ENCODE measurements at regions of chr2 and their contacts with region 1.

Region 1: GRCh38 chr2:97812931-97813330 is 99.6 kb downstream of the ZAP70 start:
- DNase-seq: no peak
- ATAC-seq: no peak

Region 2: GRCh38 chr2:97644023-97644717 is 168.8 kb before region 1 on chr2:
- intact Hi-C with region 1: no loop called
- DNase-seq: no peak
- ATAC-seq: no peak

Region 3: GRCh38 chr2:98269830-98270229 is 456.9 kb after region 1 on chr2:
- intact Hi-C with region 1: loop called in 1 of 2 experiments (anchors 10 kb)
- DNase-seq: no peak
- ATAC-seq: peak in 1 of 2 donors; percentile 41

Measured in left cardiac atrium (tissue), 4 donors.